Caco-2 (cell line): ENCODE measurements at regions of chr14 and their contacts with region 1.

Region 1: GRCh38 chr14:34733235-34733634 is 18.8 kb upstream of the CFL2 start:
- DNase-seq: peak in 1 of 2 experiments; percentile 65
- H3K4me3 ChIP-seq: no peak overlapping the region
- H3K4me3 Mint-ChIP-seq: peak overlapping the region; percentile 48
- H3K27ac Mint-ChIP-seq: peak overlapping the region; percentile 85
- H3K4me1 ChIP-seq: peaks cover 28% of the 10 kb centered on the region
- H3K4me1 Mint-ChIP-seq: peaks cover 22% of the 10 kb centered on the region
- H3K27me3 ChIP-seq: no peaks in the 10 kb centered on the region
- H3K27me3 Mint-ChIP-seq: no peaks in the 10 kb centered on the region
- CTCF ChIP-seq: no peak

Region 2: GRCh38 chr14:34722717-34723545 is 10.3 kb before region 1 on chr14:
- CTCF ChIA-PET with region 1: interaction called, 20 read pairs
- POLR2A ChIA-PET with region 1: no interaction called
- intact Hi-C with region 1: no loop called
- DNase-seq: peak in 1 of 2 experiments; percentile 60
- H3K4me3 ChIP-seq: no peak overlapping the region
- H3K4me3 Mint-ChIP-seq: no peak overlapping the region
- H3K27ac Mint-ChIP-seq: no peak overlapping the region
- H3K4me1 ChIP-seq: peaks cover 7% of the 10 kb centered on the region
- H3K4me1 Mint-ChIP-seq: peaks cover 8% of the 10 kb centered on the region
- H3K27me3 ChIP-seq: no peaks in the 10 kb centered on the region
- H3K27me3 Mint-ChIP-seq: no peaks in the 10 kb centered on the region
- CTCF ChIP-seq: peak; percentile 70 to 80

Region 3: DNA sequence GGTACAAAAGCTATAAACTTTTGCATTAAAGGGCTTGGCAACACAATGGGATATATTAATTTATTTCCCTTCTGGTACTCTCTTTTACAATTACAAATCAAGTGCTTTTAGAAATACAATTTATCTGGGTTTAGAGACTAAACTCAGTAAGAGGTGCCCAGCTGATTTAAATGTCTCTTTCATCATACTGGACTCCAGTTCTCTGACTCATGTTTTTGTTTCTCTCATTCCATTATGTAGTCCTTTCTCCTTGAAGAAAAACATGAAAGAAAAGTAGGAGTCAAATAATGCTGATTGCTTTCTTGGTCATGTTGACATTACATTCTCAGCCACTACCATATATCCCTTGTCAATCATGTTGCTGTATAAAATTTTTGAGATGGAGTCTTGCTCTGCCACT is 17.4 kb after region 1 on chr14:
- CTCF ChIA-PET with region 1: no interaction called
- POLR2A ChIA-PET with region 1: interaction called, 7 read pairs
- intact Hi-C with region 1: loop called (anchors 2 kb)
- DNase-seq: no peak
- H3K4me3 ChIP-seq: no peak overlapping the region
- H3K4me3 Mint-ChIP-seq: no peak overlapping the region
- H3K27ac Mint-ChIP-seq: no peak overlapping the region
- H3K4me1 ChIP-seq: peaks cover 43% of the 10 kb centered on the region
- H3K4me1 Mint-ChIP-seq: peaks cover 12% of the 10 kb centered on the region
- H3K27me3 ChIP-seq: no peaks in the 10 kb centered on the region
- H3K27me3 Mint-ChIP-seq: no peaks in the 10 kb centered on the region
- CTCF ChIP-seq: no peak